HCT116 (cell line): ENCODE measurements at regions of chr1 and their contacts with region 1.

Region 1: GRCh38 chr1:9455487-9456234 is 83.6 kb upstream of the SLC25A33 start:
- DNase-seq: peak; percentile 24
- ATAC-seq: peak; percentile 92
- H3K4me3 ChIP-seq: no peak overlapping the region
- H3K27ac ChIP-seq: no peak overlapping the region
- H3K4me1 ChIP-seq: no peaks in the 10 kb centered on the region
- H3K27me3 ChIP-seq: no peaks in the 10 kb centered on the region
- CTCF ChIP-seq: peak; percentile 81 to 94 (median 83)
- POLR2A ChIP-seq: no peak
- RAD21 ChIP-seq: peak; percentile 97

Region 2: GRCh38 chr1:9289090-9289534 is 166.5 kb before region 1 on chr1:
- CTCF ChIA-PET with region 1: interaction called, 26 read pairs
- POLR2A ChIA-PET with region 1: no interaction called
- RAD21 ChIA-PET with region 1: interaction called in 1 of 2 experiments, 4 read pairs
- intact Hi-C with region 1: loop called (anchors 1 kb)
- DNase-seq: peak; percentile 77
- ATAC-seq: no peak
- H3K4me3 ChIP-seq: no peak overlapping the region
- H3K27ac ChIP-seq: no peak overlapping the region
- H3K4me1 ChIP-seq: peaks cover 6 to 14% of the 10 kb centered on the region in 2 experiments
- H3K27me3 ChIP-seq: no peaks in the 10 kb centered on the region
- CTCF ChIP-seq: peak; percentile 88 to 96 (median 96)
- POLR2A ChIP-seq: no peak
- RAD21 ChIP-seq: peak; percentile 97

Region 3: GRCh38 chr1:9705337-9706093 is 249.9 kb after region 1 on chr1:
- CTCF ChIA-PET with region 1: no interaction called
- POLR2A ChIA-PET with region 1: no interaction called
- RAD21 ChIA-PET with region 1: no interaction called
- intact Hi-C with region 1: no loop called
- DNase-seq: no peak
- ATAC-seq: no peak
- H3K4me3 ChIP-seq: no peak overlapping the region
- H3K27ac ChIP-seq: no peak overlapping the region
- H3K4me1 ChIP-seq: peaks cover 2 to 9% of the 10 kb centered on the region in 2 experiments; a peak in 3 of 4 replicates
- H3K27me3 ChIP-seq: no peaks in the 10 kb centered on the region
- CTCF ChIP-seq: no peak
- POLR2A ChIP-seq: no peak
- RAD21 ChIP-seq: no peak